ENCODE measurements at regions of chr10 and their contacts with region 1.

Region 1: DNA sequence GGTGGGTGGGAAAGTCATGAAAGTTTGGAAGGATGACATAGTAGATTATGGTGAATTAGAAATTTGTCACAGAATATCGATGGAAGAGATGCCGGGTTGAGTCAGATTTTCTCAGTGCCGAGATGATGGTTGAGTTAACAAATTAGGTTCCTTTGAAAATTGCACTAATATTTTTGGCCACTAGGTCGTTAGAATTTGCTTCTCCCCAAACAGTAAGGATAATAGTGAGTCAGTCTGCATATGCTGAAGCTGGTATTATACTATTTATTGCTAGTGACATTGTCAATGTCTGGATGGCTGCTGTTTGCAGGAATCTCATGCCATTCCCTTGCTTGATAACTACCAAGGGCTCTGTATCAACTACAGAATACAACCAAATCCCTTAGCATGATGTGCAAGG is 37.7 kb upstream of the MINDY3 start:
- DNase-seq: peak; percentile 18
- H3K4me3 ChIP-seq: no peak overlapping the region
- H3K27ac ChIP-seq: no peak overlapping the region
- H3K4me1 ChIP-seq: peaks cover 12% of the 10 kb centered on the region
- H3K27me3 ChIP-seq: peaks cover 1 to 16% of the 10 kb centered on the region in 2 experiments
- CTCF ChIP-seq: peak; percentile 15 to 20
- POLR2A ChIP-seq: no peak

Region 2: GRCh38 chr10:15712883-15713282 is 185.2 kb before region 1 on chr10:
- CTCF ChIA-PET with region 1: no interaction called
- POLR2A ChIA-PET with region 1: no interaction called
- dilution Hi-C with region 1: no loop called
- intact Hi-C with region 1: no loop called
- DNase-seq: no peak
- H3K4me3 ChIP-seq: no peak overlapping the region
- H3K27ac ChIP-seq: no peak overlapping the region
- H3K4me1 ChIP-seq: no peaks in the 10 kb centered on the region
- H3K27me3 ChIP-seq: no peaks in the 10 kb centered on the region
- CTCF ChIP-seq: no peak
- POLR2A ChIP-seq: no peak

Region 3: DNA sequence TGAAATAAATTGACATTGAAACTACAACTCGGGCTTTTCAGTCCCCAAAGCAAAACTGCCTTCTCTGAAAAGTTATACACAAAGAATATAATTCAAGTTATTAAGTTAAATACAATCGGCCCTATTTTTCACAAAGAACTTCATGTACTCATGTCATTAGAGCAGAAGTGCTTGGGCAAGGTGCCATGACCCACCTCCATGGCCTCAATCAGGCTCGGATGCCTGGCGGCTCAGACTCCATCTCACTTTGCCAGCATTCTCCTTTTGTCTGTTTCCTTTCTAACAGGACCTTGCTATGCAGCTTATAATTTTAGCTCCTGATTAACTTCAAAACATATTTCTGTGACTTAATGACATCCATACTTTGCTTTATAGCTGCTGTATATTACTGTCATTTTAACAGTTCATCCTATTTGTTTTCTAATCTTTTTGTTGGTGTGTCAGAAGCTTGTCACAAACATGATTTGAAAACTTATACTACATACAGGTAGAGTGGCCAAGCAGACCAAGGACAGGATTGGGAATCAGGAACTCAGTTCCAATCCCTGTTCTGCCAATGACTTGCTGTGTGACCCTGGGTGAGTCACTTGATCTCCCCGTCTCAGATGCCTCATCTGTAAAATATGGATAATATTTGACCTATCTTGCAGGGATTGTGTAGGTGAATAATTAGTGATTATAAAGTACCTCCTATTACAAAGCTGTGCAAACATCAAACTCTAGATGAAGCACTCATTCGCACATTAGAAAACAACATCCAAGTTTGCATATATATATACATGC is 117.5 kb before region 1 on chr10:
- CTCF ChIA-PET with region 1: no interaction called
- POLR2A ChIA-PET with region 1: no interaction called
- dilution Hi-C with region 1: no loop called
- intact Hi-C with region 1: no loop called
- DNase-seq: peak; percentile 12
- H3K4me3 ChIP-seq: no peak overlapping the region
- H3K27ac ChIP-seq: no peak overlapping the region
- H3K4me1 ChIP-seq: peaks cover 5% of the 10 kb centered on the region
- H3K27me3 ChIP-seq: no peaks in the 10 kb centered on the region
- CTCF ChIP-seq: no peak
- POLR2A ChIP-seq: no peak

Region 4: DNA sequence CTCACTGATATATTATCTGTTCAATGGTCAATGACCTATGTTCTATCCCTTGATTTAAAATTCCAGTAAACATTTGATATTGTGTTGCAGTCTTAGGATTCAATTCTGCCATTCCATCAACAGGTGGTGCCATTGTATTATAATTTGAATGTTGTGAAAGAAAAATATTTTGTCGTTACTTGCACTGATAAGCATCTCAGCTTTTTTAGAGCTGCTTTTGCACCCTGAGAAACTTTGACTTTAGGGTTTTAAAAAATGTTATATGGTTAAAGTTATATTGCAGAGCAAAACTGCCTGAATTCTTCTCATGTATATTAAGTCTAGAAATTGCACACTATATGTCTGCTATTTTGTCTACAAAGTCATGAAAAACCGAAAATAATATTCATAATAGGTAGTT is 19.0 kb before region 1 on chr10:
- CTCF ChIA-PET with region 1: interaction called, 25 read pairs
- POLR2A ChIA-PET with region 1: no interaction called
- dilution Hi-C with region 1: no loop called
- intact Hi-C with region 1: no loop called
- DNase-seq: peak; percentile 66
- H3K4me3 ChIP-seq: no peak overlapping the region
- H3K27ac ChIP-seq: no peak overlapping the region
- H3K4me1 ChIP-seq: no peaks in the 10 kb centered on the region
- H3K27me3 ChIP-seq: peaks cover 15 to 23% of the 10 kb centered on the region in 2 experiments
- CTCF ChIP-seq: peak; percentile 18 to 55
- POLR2A ChIP-seq: no peak

Region 5: DNA sequence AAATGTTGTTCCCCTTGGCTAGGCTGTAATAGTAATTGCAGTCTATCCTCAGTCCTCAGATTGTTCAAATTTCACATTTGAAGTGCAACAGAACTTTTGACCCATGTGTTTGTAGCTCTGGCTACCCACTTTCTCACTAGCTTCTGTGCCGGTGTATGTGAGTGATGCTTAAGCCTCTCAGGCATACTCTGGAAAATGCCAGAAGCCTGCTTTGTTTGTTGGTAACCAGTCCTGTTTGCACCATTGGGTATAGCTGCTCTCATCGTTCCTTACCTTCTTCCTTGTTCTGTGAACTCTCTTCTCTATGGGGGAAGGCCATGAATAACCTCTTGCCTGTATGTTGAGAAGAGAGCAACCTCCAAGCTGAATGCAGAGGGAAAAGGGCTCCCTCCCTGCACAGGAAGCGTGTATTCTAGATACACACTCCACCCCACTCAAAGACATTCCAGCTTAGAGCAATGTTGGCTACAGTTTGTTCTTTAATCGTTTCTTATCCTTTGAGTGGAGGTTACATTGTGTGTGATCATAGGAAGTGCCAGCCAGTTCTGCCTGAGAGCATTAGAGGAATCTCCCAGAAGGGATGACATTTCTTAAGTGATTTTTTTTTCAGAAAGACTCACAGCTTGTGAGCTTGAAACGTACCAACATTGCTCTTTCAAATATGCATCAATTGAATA is 583.1 kb after region 1 on chr10:
- CTCF ChIA-PET with region 1: no interaction called
- POLR2A ChIA-PET with region 1: no interaction called
- dilution Hi-C with region 1: no loop called
- intact Hi-C with region 1: no loop called
- DNase-seq: no peak
- H3K4me3 ChIP-seq: no peak overlapping the region
- H3K27ac ChIP-seq: no peak overlapping the region
- H3K4me1 ChIP-seq: no peaks in the 10 kb centered on the region
- H3K27me3 ChIP-seq: peaks cover 0 to 1% of the 10 kb centered on the region in 2 experiments
- CTCF ChIP-seq: no peak
- POLR2A ChIP-seq: no peak

Region 6: DNA sequence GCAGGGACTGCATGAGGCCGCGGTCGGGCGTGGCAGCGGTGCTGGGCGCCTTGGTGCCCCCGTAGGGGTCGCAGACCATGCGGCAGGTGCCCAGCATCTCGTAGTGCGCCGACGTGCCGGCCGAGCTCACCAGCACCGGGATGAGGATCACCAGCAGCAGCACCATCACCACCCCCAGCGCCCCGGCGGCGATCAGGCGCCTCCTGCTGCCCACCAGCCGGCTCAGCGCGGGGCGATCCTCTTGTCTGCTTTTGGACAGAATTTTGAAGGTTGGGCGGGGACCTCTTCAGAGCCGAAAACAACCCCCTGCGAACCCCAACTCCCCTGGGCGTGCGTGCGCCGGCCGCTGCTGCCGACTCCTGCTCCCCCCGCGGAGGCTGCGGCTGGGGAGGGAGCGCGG is 622.9 kb after region 1 on chr10:
- CTCF ChIA-PET with region 1: interaction called, 32 read pairs
- POLR2A ChIA-PET with region 1: no interaction called
- dilution Hi-C with region 1: no loop called
- intact Hi-C with region 1: loop called (anchors 5 kb)
- DNase-seq: no peak
- H3K4me3 ChIP-seq: peak overlapping the region in 2 of 3 experiments; percentile 25 to 43
- H3K27ac ChIP-seq: no peak overlapping the region
- H3K4me1 ChIP-seq: peaks cover 12% of the 10 kb centered on the region
- H3K27me3 ChIP-seq: peaks cover 40 to 76% of the 10 kb centered on the region in 2 experiments
- CTCF ChIP-seq: peak; percentile 7 to 53
- POLR2A ChIP-seq: no peak

Region 7: GRCh38 chr10:16792675-16793074 is 894.6 kb after region 1 on chr10:
- CTCF ChIA-PET with region 1: interaction called, 13 read pairs
- POLR2A ChIA-PET with region 1: no interaction called
- dilution Hi-C with region 1: no loop called
- intact Hi-C with region 1: no loop called
- DNase-seq: no peak
- H3K4me3 ChIP-seq: no peak overlapping the region
- H3K27ac ChIP-seq: no peak overlapping the region
- H3K4me1 ChIP-seq: no peaks in the 10 kb centered on the region
- H3K27me3 ChIP-seq: no peaks in the 10 kb centered on the region
- CTCF ChIP-seq: no peak
- POLR2A ChIP-seq: no peak

Region 8: GRCh38 chr10:16817125-16818019 is 919.3 kb after region 1 on chr10 and contains the start of gene RSU1:
- CTCF ChIA-PET with region 1: interaction called, 35 read pairs
- POLR2A ChIA-PET with region 1: interaction called, 3 read pairs
- dilution Hi-C with region 1: no loop called
- intact Hi-C with region 1: no loop called
- DNase-seq: peak; percentile 100
- H3K4me3 ChIP-seq: peak within 1 kb of the TSS; percentile 43 to 86 (median 62)
- H3K27ac ChIP-seq: peak within 1 kb of the TSS; percentile 78
- H3K4me1 ChIP-seq: peaks cover 25% of the 10 kb centered on the region
- H3K27me3 ChIP-seq: no peaks in the 10 kb centered on the region
- CTCF ChIP-seq: no peak
- POLR2A ChIP-seq: peak; percentile 49
- total RNA-seq, gene RSU1: 91.9 and 104 TPM in 2 replicates

Measured in endothelial cell of umbilical vein (primary cell).